Heart right ventricle (tissue), 16 donors: ENCODE measurements at regions of chr1 and their contacts with region 1.

Region 1: DNA sequence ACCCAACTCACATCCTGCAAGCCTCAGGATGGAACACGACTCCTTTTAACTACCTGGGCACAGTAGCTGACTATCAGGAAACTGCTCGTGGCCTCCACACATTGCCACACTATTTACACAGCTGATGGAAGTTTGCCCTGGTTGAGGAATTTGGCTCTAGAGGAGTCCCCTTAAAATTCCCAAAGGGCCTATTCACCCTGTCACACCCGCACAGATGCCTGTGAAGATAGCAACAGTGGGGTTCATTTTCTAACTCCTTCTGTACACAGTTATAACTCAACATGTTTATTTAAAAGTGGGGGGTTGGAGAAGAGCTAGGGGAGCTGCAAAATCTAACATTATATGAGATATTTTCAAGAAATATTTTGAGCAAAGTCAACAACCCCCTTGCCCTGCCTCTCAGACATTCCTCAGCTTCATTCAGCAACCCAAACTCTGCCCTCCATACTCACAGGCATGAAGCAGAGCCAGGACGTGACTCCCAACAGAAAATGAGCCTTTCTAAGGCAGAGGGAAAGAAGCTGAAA is 35.8 kb upstream of the CCN1 start:
- DNase-seq: no peak
- ATAC-seq: peak in 5 of 8 donors; percentile 25 to 72 (median 42)
- H3K4me3 ChIP-seq: no peak overlapping the region
- H3K27ac ChIP-seq: peak overlapping the region in 5 of 10 donors; percentile 17 to 61 (median 38)
- H3K4me1 ChIP-seq: peaks cover 0 to 40% (median 16%) of the 10 kb centered on the region in 9 donors
- H3K27me3 ChIP-seq: no peaks in the 10 kb centered on the region
- CTCF ChIP-seq: no peak

Region 2: DNA sequence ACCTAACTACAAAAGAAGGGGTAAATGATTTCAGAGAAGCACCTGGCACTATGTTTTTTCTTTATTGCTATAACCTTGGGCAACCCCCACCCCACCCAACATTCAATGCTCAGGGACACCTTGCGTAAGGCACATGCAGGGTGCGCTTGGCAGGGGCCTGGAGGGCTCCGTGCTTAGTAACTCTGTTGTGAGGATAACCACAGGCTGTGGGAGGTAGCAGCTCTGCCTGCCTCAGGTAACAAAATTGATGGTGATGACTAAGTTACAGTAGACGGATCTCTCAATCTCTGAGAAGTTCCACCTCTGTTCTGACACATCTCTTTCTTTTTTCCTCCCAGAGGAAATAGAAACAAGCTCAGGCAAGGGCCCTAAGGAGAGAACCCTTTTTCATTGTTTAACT is 27.1 kb after region 1 on chr1:
- intact Hi-C with region 1: loop called in 1 of 10 experiments (anchors 1 kb)
- DNase-seq: no peak
- ATAC-seq: no peak
- H3K4me3 ChIP-seq: no peak overlapping the region
- H3K27ac ChIP-seq: no peak overlapping the region
- H3K4me1 ChIP-seq: peaks cover 0 to 45% (median 18%) of the 10 kb centered on the region in 9 donors
- H3K27me3 ChIP-seq: peaks cover 0 to 16% (median 0%) of the 10 kb centered on the region in 7 donors
- CTCF ChIP-seq: no peak